ENCODE measurements at regions of chr5 and their contacts with region 1.

Region 1: DNA sequence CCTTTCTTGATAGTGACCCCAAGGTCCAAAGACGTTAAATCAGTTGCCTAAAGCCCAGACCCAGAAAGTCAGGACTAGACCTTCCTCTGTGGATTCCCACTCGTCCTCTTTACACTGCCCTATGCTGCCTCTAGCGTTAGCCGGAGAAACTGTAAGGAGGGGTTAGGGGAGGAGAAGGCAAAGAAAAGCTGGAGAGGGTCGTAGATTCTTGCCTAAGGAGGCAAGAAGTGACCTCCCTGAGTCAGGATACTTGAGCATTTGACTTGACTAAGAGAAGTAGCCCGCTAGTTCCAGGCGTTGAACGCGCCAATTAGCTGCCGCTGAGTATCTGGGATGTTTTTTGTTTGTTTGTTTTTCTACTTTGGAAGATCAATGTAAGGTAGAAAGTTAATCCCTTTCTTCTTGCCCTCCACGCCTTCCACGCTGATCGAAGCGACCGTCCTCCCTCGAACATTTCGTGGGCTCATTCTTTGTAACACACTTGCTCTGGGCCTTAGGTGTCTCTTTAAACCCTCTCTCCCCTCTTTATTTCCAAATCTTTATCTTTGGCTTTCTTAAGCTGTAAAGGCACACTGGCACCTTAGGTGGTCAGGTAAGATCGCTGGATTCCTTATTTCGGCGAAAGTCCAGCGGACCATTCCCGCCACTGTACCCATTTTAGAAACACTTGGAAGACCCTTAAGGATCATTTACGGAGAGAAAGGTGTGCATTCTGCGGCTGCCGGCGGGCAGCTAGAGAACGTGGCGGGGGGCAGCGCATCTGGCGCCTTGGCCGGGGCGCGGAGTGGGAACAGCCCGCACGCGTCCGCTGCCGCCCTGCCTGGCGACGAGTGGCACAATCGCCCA is 5.1 kb upstream of the RGMB start:
- DNase-seq: peak; percentile 78
- H3K4me3 ChIP-seq: peak overlapping the region; percentile 70 to 96 (median 90)
- H3K27ac ChIP-seq: peak overlapping the region; percentile 25
- H3K4me1 ChIP-seq: peaks cover 20% of the 10 kb centered on the region
- H3K27me3 ChIP-seq: no peaks in the 10 kb centered on the region
- CTCF ChIP-seq: peak; percentile 84 to 90
- POLR2A ChIP-seq: no peak

Region 2: DNA sequence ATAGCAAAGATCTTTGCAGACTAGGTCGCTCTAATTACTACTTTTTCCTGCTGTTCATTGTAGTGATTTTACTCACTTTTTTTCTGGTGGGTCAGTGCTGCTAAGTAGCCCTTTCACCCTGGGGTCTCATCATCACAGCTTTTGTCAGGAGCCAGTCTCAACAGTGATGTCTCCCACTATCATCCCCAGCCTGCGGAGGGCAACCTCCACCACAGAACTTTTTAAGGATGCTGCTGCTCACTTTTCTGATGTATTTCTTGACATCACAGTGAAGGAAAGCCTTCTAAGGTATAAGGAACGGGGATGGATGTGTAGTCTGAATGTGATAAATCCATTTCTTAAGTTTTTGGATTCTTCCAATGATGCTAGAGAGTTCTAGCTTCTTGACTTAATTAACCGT is 1342.9 kb before region 1 on chr5:
- CTCF ChIA-PET with region 1: interaction called, 12 read pairs
- POLR2A ChIA-PET with region 1: no interaction called
- dilution Hi-C with region 1: no loop called
- intact Hi-C with region 1: loop called (anchors 1 kb)
- DNase-seq: peak; percentile 24
- H3K4me3 ChIP-seq: no peak overlapping the region
- H3K27ac ChIP-seq: no peak overlapping the region
- H3K4me1 ChIP-seq: no peaks in the 10 kb centered on the region
- H3K27me3 ChIP-seq: no peaks in the 10 kb centered on the region
- CTCF ChIP-seq: peak; percentile 36 to 43
- POLR2A ChIP-seq: no peak

Region 3: GRCh38 chr5:97838214-97838613 is 930.2 kb before region 1 on chr5:
- CTCF ChIA-PET with region 1: interaction called, 10 read pairs
- POLR2A ChIA-PET with region 1: no interaction called
- dilution Hi-C with region 1: no loop called
- intact Hi-C with region 1: loop called (anchors 1 kb)
- DNase-seq: peak; percentile 96
- H3K4me3 ChIP-seq: no peak overlapping the region
- H3K27ac ChIP-seq: peak overlapping the region; percentile 92
- H3K4me1 ChIP-seq: peaks cover 46% of the 10 kb centered on the region
- H3K27me3 ChIP-seq: no peaks in the 10 kb centered on the region
- CTCF ChIP-seq: no peak
- POLR2A ChIP-seq: peak; percentile 47

Region 4: GRCh38 chr5:98365126-98365525 is 403.3 kb before region 1 on chr5:
- CTCF ChIA-PET with region 1: interaction called, 12 read pairs
- POLR2A ChIA-PET with region 1: no interaction called
- dilution Hi-C with region 1: no loop called
- intact Hi-C with region 1: no loop called
- DNase-seq: no peak
- H3K4me3 ChIP-seq: no peak overlapping the region
- H3K27ac ChIP-seq: no peak overlapping the region
- H3K4me1 ChIP-seq: peaks cover 6% of the 10 kb centered on the region
- H3K27me3 ChIP-seq: no peaks in the 10 kb centered on the region
- CTCF ChIP-seq: no peak
- POLR2A ChIP-seq: no peak

Region 5: DNA sequence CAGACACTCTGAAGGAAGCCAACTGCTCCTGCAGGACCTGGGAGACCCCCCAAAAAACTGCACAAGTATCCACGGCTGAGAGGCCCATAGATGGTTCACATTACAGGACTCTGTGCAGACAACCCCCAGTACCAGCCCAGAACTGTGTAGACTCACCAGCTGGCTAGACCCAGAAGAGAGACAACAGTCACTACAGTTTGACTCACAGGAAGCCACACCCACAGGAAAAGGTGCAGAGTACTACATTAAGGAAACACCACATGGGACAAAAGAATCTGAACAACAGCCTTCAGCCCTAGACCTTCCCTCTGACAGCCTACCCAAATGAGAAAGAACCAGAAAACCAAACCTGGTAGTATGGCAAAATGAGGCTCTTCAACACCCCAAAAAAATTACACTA is 276.1 kb before region 1 on chr5:
- CTCF ChIA-PET with region 1: no interaction called
- POLR2A ChIA-PET with region 1: no interaction called
- dilution Hi-C with region 1: no loop called
- intact Hi-C with region 1: no loop called
- DNase-seq: peak; percentile 40
- H3K4me3 ChIP-seq: no peak overlapping the region
- H3K27ac ChIP-seq: no peak overlapping the region
- H3K4me1 ChIP-seq: peaks cover 10% of the 10 kb centered on the region
- H3K27me3 ChIP-seq: no peaks in the 10 kb centered on the region
- CTCF ChIP-seq: no peak
- POLR2A ChIP-seq: no peak

Region 6: GRCh38 chr5:98621821-98622220 is 146.6 kb before region 1 on chr5:
- CTCF ChIA-PET with region 1: no interaction called
- POLR2A ChIA-PET with region 1: no interaction called
- dilution Hi-C with region 1: no loop called
- intact Hi-C with region 1: no loop called
- DNase-seq: no peak
- H3K4me3 ChIP-seq: no peak overlapping the region
- H3K27ac ChIP-seq: no peak overlapping the region
- H3K4me1 ChIP-seq: no peaks in the 10 kb centered on the region
- H3K27me3 ChIP-seq: no peaks in the 10 kb centered on the region
- CTCF ChIP-seq: no peak
- POLR2A ChIP-seq: no peak

Region 7: GRCh38 chr5:98780390-98780789 is 12.0 kb after region 1 on chr5:
- CTCF ChIA-PET with region 1: interaction called, 30 read pairs
- POLR2A ChIA-PET with region 1: no interaction called
- dilution Hi-C with region 1: no loop called
- intact Hi-C with region 1: no loop called
- DNase-seq: no peak
- H3K4me3 ChIP-seq: no peak overlapping the region
- H3K27ac ChIP-seq: no peak overlapping the region
- H3K4me1 ChIP-seq: peaks cover 16% of the 10 kb centered on the region
- H3K27me3 ChIP-seq: no peaks in the 10 kb centered on the region
- CTCF ChIP-seq: no peak
- POLR2A ChIP-seq: no peak

Region 8: DNA sequence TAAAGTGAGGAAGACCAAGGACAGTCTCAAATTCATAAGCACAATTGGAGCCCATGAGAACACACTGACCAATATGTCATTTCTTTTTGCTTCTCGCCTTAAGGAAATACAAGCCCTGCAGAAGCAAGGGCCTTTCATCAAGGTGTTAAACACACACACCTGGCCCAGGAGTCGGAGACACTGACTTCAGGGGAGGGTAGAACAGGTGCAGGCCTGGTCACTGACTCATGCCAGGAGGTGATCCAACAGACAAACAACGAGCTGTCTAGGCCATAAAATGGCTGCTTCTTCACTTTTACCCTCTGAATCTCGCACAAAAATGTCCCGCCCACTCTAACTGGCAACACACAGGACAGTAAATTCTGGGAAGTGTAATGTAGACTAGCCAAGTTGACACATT is 67.8 kb after region 1 on chr5:
- CTCF ChIA-PET with region 1: no interaction called
- POLR2A ChIA-PET with region 1: no interaction called
- dilution Hi-C with region 1: no loop called
- intact Hi-C with region 1: no loop called
- DNase-seq: no peak
- H3K4me3 ChIP-seq: no peak overlapping the region
- H3K27ac ChIP-seq: no peak overlapping the region
- H3K4me1 ChIP-seq: no peaks in the 10 kb centered on the region
- H3K27me3 ChIP-seq: no peaks in the 10 kb centered on the region
- CTCF ChIP-seq: no peak
- POLR2A ChIP-seq: no peak

Region 9: DNA sequence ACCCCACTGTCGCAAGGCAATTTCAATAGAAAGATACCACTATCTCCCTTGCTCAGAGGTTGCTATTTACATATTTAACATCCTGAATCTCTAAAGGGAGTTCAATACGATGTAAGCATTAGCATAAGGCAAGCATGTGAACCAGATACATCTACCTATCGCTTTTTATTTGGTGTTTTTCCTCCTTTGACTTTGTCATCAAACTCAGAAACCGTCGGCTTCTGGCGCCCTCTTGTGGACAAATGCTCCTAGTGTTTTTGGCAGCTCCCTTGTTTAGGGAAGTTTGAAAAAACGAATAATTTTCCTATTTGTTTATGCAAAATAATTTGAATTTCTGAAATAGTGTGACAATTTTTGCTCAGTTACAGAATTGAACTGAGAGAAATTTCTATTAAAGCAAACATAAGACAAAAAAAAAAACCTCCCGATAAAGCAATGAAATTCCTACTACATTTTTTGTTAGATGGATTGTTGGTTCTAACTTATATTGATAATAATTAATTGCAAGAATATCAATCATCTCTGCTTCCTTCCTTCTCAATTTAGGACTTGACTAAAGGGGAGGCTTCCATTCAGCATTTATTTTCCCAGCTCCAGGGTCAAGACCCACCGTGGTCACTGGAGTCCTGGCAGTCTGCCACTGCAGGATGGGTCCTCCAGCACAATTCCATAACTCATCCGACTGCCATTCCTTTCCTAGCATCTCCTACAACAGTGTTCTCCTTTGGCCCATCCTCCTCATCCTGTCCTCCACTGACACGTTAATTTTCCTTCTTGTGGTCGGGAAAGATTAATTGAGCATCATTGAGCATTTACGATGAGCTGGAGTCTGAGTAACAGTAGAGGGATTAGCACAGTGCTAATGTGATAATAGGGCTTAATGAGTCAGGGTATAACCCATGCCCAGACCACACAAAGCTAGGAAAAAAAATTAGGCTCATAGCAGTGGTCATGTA is 292.2 kb after region 1 on chr5:
- CTCF ChIA-PET with region 1: interaction called, 12 read pairs
- POLR2A ChIA-PET with region 1: no interaction called
- dilution Hi-C with region 1: no loop called
- intact Hi-C with region 1: loop called (anchors 5 kb)
- DNase-seq: peak; percentile 77
- H3K4me3 ChIP-seq: no peak overlapping the region
- H3K27ac ChIP-seq: no peak overlapping the region
- H3K4me1 ChIP-seq: peaks cover 3% of the 10 kb centered on the region
- H3K27me3 ChIP-seq: no peaks in the 10 kb centered on the region
- CTCF ChIP-seq: peak; percentile 64 to 86
- POLR2A ChIP-seq: no peak